Cardiac septum (tissue), 1 donor: ENCODE measurements at regions of chr16 and their contacts with region 1.

Region 1: DNA sequence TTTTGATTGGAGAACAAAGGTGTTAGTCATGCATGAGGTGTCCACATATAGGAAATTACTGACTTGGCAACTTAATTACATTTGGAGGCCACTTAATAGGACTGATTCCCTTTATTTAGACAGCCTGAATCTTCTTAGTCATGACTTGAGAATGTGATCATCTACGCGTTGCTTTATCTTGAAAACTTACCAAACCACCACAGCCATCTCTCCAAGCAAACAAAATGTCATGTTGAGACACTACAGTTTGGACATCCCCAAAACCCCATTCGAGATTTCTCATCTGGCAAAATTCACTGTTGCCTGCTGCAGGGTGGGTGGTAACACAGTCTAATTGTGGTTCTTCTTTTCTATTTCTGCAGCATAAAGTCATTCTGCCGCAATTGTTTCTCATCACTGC is 176.5 kb upstream of the CDH5 start:
- DNase-seq: no peak

Region 2: GRCh38 chr16:66240631-66241395 is 50.9 kb after region 1 on chr16:
- intact Hi-C with region 1: loop called (anchors 5 kb)
- DNase-seq: no peak